Ovary (tissue), 10 donors: ENCODE measurements at regions of chr5 and their contacts with region 1.

Region 1: DNA sequence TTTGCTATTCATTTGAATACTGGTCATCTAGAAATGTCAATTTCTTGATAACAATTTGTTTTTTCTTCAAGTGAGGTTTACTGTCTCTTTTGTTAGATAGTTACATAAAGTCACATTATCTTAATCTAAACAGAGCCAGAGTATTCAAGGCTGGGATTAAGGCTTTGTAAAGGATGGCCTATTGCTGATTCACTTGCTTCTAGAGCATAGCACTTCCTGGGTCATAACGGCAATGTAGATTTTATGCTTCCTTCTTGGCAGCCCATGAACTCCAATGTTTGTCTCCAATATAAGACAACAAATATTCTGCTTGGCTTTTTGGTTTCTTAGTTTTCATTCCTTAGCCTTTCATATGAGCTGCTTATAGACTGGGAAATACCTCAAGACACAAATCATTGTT is 2007.9 kb upstream of the CDH6 start:
- DNase-seq: no peak
- H3K4me3 ChIP-seq: no peak overlapping the region
- H3K27ac ChIP-seq: no peak overlapping the region
- H3K4me1 ChIP-seq: no peaks in the 10 kb centered on the region
- H3K27me3 ChIP-seq: no peaks in the 10 kb centered on the region
- CTCF ChIP-seq: no peak
- EP300 ChIP-seq: no peak
- POLR2A ChIP-seq: no peak

Region 2: DNA sequence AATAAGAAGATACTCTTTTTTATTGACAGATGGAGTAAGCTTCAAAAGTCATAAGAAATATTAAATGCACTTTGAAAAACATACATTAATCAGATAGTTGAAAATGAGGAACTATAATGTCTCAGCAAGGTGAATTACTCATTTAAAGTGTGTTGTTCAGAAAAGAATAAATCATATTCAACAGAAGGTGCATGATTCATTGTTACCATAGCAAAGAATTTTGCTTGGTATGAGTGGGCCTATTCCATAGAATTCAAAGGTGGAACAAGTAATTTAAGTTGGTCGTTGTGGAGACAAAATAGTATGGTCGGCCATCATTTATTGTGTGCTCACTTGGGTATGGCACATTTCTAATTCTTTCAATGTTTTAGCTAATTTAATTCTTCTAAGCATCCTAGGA is 227.0 kb before region 1 on chr5:
- intact Hi-C with region 1: loop called in 1 of 4 experiments (anchors 5 kb)
- DNase-seq: no peak
- H3K4me3 ChIP-seq: no peak overlapping the region
- H3K27ac ChIP-seq: no peak overlapping the region
- H3K4me1 ChIP-seq: no peaks in the 10 kb centered on the region
- H3K27me3 ChIP-seq: no peaks in the 10 kb centered on the region
- CTCF ChIP-seq: no peak
- EP300 ChIP-seq: no peak
- POLR2A ChIP-seq: no peak

Region 3: DNA sequence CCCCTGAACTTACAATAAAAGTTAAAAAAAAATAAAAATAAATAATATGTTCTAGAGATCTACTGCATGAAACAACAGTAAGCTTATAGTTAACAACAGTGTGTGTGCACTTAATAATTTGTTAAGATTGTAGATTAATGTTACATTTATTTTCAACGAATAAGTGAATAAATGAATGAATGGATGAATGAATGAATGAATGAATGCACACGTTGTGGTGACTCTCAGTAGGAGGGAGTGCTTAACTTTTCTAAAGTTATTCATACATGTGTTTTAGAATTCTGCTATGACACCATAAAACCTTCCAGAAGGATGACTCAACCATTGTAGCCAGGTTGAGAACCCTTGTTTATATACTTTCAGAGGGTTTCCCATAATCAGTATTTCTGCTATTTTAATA is 738.5 kb after region 1 on chr5:
- intact Hi-C with region 1: no loop called
- DNase-seq: no peak
- H3K4me3 ChIP-seq: no peak overlapping the region
- H3K27ac ChIP-seq: no peak overlapping the region
- H3K4me1 ChIP-seq: no peaks in the 10 kb centered on the region
- H3K27me3 ChIP-seq: no peaks in the 10 kb centered on the region
- CTCF ChIP-seq: no peak
- EP300 ChIP-seq: no peak
- POLR2A ChIP-seq: no peak